ENCODE measurements at regions of chr17 and their contacts with region 1.

Region 1: DNA sequence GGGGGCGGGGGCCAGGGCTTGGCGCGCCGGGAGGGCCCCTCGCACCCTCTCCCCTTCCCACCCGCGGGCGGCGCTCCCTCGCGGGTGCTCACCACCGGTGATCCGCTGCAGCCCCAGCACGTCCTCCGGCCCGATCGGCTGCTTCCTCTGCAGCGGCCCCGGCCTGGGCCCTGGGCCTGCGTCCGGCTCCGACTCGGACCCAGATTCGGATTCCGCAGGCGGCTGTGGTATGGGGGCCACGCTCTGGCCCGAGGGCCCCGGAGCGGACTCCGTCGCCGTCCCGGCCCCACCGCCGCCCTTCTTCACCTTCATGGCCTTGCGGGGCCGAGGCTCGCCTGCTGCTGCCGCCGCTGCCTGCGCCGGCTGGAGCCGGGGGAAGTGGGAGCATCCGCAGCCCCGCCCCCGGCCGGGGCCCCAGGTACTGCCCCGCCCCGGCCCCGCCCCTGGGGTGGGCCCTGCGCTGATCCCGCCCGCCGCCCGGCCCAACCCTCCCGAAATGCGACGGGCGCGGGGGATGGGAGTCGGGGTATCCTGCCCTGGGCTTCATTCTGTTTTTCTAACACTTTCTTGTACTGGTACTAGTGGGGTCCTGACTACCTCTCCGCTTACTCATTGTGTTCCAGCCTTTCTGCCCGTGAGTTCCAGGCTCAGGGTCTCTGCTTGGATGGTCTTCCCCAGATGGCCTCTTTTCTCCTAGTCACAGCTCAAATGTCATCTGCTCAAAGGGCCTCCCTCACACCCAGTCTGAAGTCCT is at the start of gene UNC119:
- DNase-seq: peak; percentile 86
- ATAC-seq: peak; percentile 75
- H3K4me3 ChIP-seq: peak within 1 kb of the TSS; percentile 62 to 85 (median 78)
- H3K4me3 Mint-ChIP-seq: peak within 1 kb of the TSS; percentile 95
- H3K27ac ChIP-seq: peak within 1 kb of the TSS; percentile 91 to 97
- H3K27ac Mint-ChIP-seq: peak within 1 kb of the TSS; percentile 96
- H3K4me1 ChIP-seq: peaks cover 50 to 51% of the 10 kb centered on the region in 2 donors
- H3K4me1 Mint-ChIP-seq: peaks cover 50% of the 10 kb centered on the region
- H3K27me3 ChIP-seq: no peaks in the 10 kb centered on the region
- H3K27me3 Mint-ChIP-seq: no peaks in the 10 kb centered on the region
- CTCF ChIP-seq: no peak
- total RNA-seq, gene UNC119: 75.3 and 84.2 TPM in 2 replicates

Region 2: DNA sequence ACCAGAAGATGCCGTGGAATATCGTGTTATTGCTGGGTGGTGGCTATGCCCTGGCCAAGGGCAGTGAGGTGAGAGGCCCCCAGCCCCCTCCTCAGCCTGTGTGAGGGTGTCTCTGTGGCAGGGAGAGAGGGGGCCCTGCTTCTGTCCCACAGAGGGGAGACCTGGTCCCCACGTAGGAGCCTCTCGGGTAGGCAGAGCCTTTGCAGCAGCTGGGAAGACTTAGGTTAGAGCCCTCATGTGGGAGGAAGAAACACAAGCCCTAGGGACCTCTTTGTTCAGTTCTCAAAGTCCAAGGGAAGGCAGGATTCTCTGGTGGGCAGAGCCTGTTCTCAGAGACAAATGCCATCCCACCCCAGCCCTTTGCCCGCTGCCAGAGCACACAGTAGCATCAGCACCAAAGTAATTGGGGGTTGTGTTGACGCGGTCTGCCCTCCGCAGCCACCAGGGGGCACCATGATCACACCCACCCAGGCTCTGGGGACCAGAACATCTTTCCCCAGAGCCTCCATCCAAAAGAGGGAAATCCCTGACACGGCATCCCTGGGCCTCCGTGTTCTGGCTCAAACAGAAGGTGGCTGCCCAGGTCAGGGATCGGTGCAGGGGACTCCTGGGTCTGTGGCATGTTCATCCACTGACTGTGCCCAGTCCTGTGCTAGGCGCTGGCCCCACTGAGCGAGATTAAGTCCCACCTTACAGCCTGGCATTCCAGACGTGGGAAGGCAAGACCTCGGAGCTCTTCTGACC is 57.8 kb before region 1 on chr17:
- CTCF ChIA-PET with region 1: interaction called, 22 read pairs
- POLR2A ChIA-PET with region 1: no interaction called
- intact Hi-C with region 1: loop called (anchors 2 kb)
- DNase-seq: peak; percentile 86
- ATAC-seq: peak; percentile 85
- H3K4me3 ChIP-seq: no peak overlapping the region
- H3K4me3 Mint-ChIP-seq: no peak overlapping the region
- H3K27ac ChIP-seq: no peak overlapping the region
- H3K27ac Mint-ChIP-seq: no peak overlapping the region
- H3K4me1 ChIP-seq: peaks cover 0 to 11% of the 10 kb centered on the region in 2 donors
- H3K4me1 Mint-ChIP-seq: peaks cover 11% of the 10 kb centered on the region
- H3K27me3 ChIP-seq: no peaks in the 10 kb centered on the region
- H3K27me3 Mint-ChIP-seq: no peaks in the 10 kb centered on the region
- CTCF ChIP-seq: peak; percentile 85

Region 3: GRCh38 chr17:28524476-28525368 is 27.7 kb before region 1 on chr17:
- CTCF ChIA-PET with region 1: no interaction called
- POLR2A ChIA-PET with region 1: no interaction called
- intact Hi-C with region 1: no loop called
- DNase-seq: no peak
- ATAC-seq: no peak
- H3K4me3 ChIP-seq: no peak overlapping the region
- H3K4me3 Mint-ChIP-seq: no peak overlapping the region
- H3K27ac ChIP-seq: no peak overlapping the region
- H3K27ac Mint-ChIP-seq: no peak overlapping the region
- H3K4me1 ChIP-seq: no peaks in the 10 kb centered on the region
- H3K4me1 Mint-ChIP-seq: no peaks in the 10 kb centered on the region
- H3K27me3 ChIP-seq: no peaks in the 10 kb centered on the region
- H3K27me3 Mint-ChIP-seq: no peaks in the 10 kb centered on the region
- CTCF ChIP-seq: no peak

Region 4: GRCh38 chr17:28540231-28540630 is 12.2 kb before region 1 on chr17:
- CTCF ChIA-PET with region 1: interaction called, 11 read pairs
- POLR2A ChIA-PET with region 1: no interaction called
- intact Hi-C with region 1: no loop called
- DNase-seq: no peak
- ATAC-seq: no peak
- H3K4me3 ChIP-seq: no peak overlapping the region
- H3K4me3 Mint-ChIP-seq: no peak overlapping the region
- H3K27ac ChIP-seq: no peak overlapping the region
- H3K27ac Mint-ChIP-seq: no peak overlapping the region
- H3K4me1 ChIP-seq: peaks cover 4 to 13% of the 10 kb centered on the region in 2 donors
- H3K4me1 Mint-ChIP-seq: peaks cover 11% of the 10 kb centered on the region
- H3K27me3 ChIP-seq: no peaks in the 10 kb centered on the region
- H3K27me3 Mint-ChIP-seq: no peaks in the 10 kb centered on the region
- CTCF ChIP-seq: no peak

Region 5: DNA sequence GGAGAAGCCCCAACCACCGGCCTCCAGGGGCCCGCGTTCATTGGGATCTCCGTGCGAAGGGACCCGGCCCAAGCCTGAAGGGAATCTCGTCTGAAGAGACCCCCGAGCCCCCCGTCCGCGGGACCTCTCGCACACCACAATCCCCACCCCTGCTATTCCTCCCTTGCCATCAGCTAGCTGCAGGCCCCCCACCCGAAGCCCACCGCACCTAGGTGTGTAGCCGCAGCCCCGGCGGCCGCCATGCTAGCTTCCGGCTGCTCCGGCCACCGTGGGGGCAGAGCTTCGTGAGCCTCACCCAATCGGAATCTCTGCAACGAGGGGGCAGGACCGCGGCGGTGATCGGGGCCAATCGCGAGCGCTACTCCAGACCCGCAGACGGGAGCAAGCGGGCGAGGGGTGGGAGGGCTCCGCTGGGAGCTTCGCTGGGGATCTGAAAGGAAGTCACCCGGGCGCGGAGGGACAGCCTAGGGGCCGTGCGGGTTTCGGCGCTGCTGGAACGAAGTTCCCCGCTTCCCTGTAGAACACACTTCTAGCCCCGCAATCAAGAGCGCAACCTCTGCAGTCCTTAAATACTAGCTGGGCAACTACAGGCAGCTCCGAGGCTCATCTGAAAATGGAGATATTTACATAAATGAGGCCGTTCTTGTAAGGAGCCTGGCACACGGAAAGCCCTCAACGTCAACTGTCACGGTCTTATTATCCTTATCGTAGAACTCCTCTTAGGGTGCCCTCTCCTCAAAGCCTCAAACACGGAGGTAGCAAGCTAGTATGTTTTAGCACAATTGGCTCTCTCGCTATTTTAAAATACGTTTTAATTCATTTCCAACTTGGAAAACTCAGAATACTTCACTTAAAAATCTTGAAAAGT is 19.1 kb after region 1 on chr17 and contains the start of gene PIGS:
- CTCF ChIA-PET with region 1: interaction called, 31 read pairs
- POLR2A ChIA-PET with region 1: interaction called, 14 read pairs
- intact Hi-C with region 1: loop called (anchors 1 kb)
- DNase-seq: peak; percentile 92
- ATAC-seq: peak; percentile 96
- H3K4me3 ChIP-seq: peak within 1 kb of the TSS; percentile 69 to 99 (median 86)
- H3K4me3 Mint-ChIP-seq: peak within 1 kb of the TSS; percentile 95
- H3K27ac ChIP-seq: peak within 1 kb of the TSS; percentile 74 to 80
- H3K27ac Mint-ChIP-seq: peak within 1 kb of the TSS; percentile 93
- H3K4me1 ChIP-seq: peaks cover 45 to 64% of the 10 kb centered on the region in 2 donors
- H3K4me1 Mint-ChIP-seq: peaks cover 60% of the 10 kb centered on the region
- H3K27me3 ChIP-seq: no peaks in the 10 kb centered on the region
- H3K27me3 Mint-ChIP-seq: no peaks in the 10 kb centered on the region
- CTCF ChIP-seq: no peak
- total RNA-seq, gene PIGS: 52.3 and 55.1 TPM in 2 replicates

Region 6: DNA sequence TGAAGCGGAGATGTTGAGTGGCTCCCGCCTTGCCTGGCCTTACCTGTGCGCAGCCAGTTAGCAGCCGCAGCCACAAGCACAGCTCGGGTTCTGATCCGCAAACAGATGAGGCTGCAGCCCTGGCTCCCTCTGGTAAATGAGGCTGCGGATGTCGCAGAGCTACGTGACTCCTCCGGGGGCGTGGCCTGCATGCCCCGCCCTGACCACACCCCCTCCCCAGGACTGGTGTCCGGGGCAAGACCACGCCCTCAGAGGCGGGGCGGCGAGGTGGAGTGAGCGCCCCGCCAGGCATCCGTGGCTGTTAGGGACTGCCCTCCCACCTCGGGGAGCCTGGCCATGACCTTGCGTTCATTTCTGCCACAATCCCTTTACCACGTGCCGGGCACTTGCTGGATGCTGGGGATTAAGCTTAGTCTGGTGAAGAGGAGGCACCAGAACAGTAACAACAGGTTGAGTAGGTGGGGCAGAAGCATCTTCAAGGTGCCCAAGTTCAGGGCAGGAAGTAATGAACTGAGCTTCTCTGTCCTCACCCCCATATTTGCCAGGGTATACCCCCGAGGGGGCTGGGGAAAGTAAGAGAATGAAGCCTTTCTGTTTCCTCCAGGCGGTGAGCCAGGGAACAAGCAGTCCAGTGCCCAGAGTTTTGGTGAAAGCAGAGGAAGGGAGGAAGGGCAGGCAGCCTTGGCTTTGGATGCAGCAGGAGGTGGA is 24.5 kb after region 1 on chr17 and contains the start of gene ALDOC:
- CTCF ChIA-PET with region 1: interaction called, 31 read pairs
- POLR2A ChIA-PET with region 1: interaction called, 4 read pairs
- intact Hi-C with region 1: loop called (anchors 1 kb)
- DNase-seq: peak; percentile 97
- ATAC-seq: peak; percentile 100
- H3K4me3 ChIP-seq: peak within 1 kb of the TSS in 4 of 5 experiments; percentile 36 to 58 (median 48)
- H3K4me3 Mint-ChIP-seq: peak within 1 kb of the TSS; percentile 85
- H3K27ac ChIP-seq: peak within 1 kb of the TSS; percentile 34 to 72
- H3K27ac Mint-ChIP-seq: peak within 1 kb of the TSS; percentile 93
- H3K4me1 ChIP-seq: peaks cover 16 to 27% of the 10 kb centered on the region in 2 donors
- H3K4me1 Mint-ChIP-seq: peaks cover 26% of the 10 kb centered on the region
- H3K27me3 ChIP-seq: no peaks in the 10 kb centered on the region
- H3K27me3 Mint-ChIP-seq: no peaks in the 10 kb centered on the region
- CTCF ChIP-seq: no peak
- total RNA-seq, gene ALDOC: 16.7 and 20.7 TPM in 2 replicates

Region 7: GRCh38 chr17:28598799-28599310 is 46.4 kb after region 1 on chr17 and contains the start of gene SPAG5:
- CTCF ChIA-PET with region 1: interaction called, 7 read pairs
- POLR2A ChIA-PET with region 1: interaction called, 5 read pairs
- intact Hi-C with region 1: loop called (anchors 1 kb)
- DNase-seq: peak; percentile 96
- ATAC-seq: peak; percentile 92
- H3K4me3 ChIP-seq: peak within 1 kb of the TSS; percentile 72 to 90 (median 79)
- H3K4me3 Mint-ChIP-seq: peak within 1 kb of the TSS; percentile 98
- H3K27ac ChIP-seq: peak within 1 kb of the TSS; percentile 95 to 98
- H3K27ac Mint-ChIP-seq: peak within 1 kb of the TSS; percentile 98
- H3K4me1 ChIP-seq: peaks cover 19% of the 10 kb centered on the region in 2 donors
- H3K4me1 Mint-ChIP-seq: peaks cover 24% of the 10 kb centered on the region
- H3K27me3 ChIP-seq: no peaks in the 10 kb centered on the region
- H3K27me3 Mint-ChIP-seq: no peaks in the 10 kb centered on the region
- CTCF ChIP-seq: no peak
- total RNA-seq, gene SPAG5: 8.0 and 10.1 TPM in 2 replicates

Region 8: DNA sequence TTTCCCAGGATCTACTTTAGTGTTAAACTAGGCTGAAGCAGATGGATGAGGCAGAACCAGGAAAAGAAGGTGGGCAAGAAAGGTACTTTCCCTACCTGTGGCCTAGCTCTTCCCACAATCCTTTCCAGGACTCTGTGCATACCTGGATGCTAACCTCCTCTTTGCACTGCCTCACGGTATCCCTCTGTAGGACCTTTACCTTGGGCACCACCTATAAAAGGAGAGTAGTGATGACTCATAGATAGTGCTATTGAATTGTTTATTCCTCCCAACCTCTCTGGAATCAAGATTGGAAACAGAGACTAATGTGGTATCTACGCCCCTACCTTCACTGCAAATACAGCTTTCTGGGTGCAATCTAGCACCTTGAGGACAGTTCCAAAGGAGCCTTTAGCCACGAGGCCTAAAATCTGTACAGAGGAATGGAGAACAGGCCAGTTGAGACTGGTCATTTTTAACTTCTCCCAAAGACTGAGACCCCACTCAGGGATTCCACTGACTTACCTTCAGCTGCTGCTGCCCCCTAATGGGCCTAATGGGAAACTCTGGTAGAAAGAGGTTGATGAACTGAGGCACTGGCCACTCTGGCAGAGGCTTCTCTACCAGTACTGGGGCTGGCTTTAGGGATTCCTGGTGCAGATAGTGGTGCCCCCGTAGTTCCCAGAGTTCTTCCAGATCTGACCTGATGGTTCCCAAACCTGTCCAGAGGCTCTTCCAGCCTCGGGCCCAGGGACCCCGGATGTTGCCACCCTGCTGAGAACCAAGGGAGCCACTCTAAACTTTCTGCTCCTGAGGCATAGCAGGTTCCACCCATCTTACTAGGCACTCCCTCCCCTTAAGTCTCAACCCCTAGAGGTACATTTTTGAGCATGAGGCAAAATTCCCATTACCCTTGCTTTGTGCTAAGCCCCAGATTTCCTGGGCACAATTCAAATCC is 60.8 kb after region 1 on chr17:
- CTCF ChIA-PET with region 1: interaction called, 30 read pairs
- POLR2A ChIA-PET with region 1: interaction called, 16 read pairs
- intact Hi-C with region 1: no loop called
- DNase-seq: peak; percentile 63
- ATAC-seq: peak; percentile 64
- H3K4me3 ChIP-seq: no peak overlapping the region
- H3K4me3 Mint-ChIP-seq: no peak overlapping the region
- H3K27ac ChIP-seq: peak overlapping the region in 1 of 2 donors; percentile 46
- H3K27ac Mint-ChIP-seq: peak overlapping the region; percentile 32
- H3K4me1 ChIP-seq: peaks cover 22 to 33% of the 10 kb centered on the region in 2 donors
- H3K4me1 Mint-ChIP-seq: peaks cover 38% of the 10 kb centered on the region
- H3K27me3 ChIP-seq: no peaks in the 10 kb centered on the region
- H3K27me3 Mint-ChIP-seq: no peaks in the 10 kb centered on the region
- CTCF ChIP-seq: peak; percentile 82

Region 9: DNA sequence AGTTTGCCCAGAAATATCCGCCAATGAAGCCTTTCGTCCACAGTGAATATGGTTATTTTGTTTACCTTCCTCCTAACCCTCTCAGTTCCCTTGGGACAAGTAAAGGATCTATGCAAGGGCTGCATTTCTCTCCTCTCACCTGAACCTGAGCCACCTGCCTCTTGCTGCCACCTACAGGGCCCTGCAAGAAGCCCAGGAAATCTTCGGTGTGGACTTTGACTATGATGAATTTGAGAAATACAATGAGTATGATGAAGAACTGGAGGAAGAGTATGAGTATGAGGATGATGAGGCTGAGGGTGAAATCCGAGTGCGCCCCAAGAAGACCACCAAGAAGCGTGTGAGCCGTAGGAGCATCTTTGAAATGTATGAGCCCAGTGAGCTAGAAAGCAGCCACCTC is 123.6 kb after region 1 on chr17:
- CTCF ChIA-PET with region 1: no interaction called
- POLR2A ChIA-PET with region 1: no interaction called
- intact Hi-C with region 1: no loop called
- DNase-seq: peak; percentile 27
- ATAC-seq: no peak
- H3K4me3 ChIP-seq: no peak overlapping the region
- H3K4me3 Mint-ChIP-seq: no peak overlapping the region
- H3K27ac ChIP-seq: no peak overlapping the region
- H3K27ac Mint-ChIP-seq: peak overlapping the region; percentile 16
- H3K4me1 ChIP-seq: no peaks in the 10 kb centered on the region
- H3K4me1 Mint-ChIP-seq: no peaks in the 10 kb centered on the region
- H3K27me3 ChIP-seq: no peaks in the 10 kb centered on the region
- H3K27me3 Mint-ChIP-seq: no peaks in the 10 kb centered on the region
- CTCF ChIP-seq: peak; percentile 45

Measured in B cell (primary cell).